Sciatic nerve (tissue), 2 donors: ENCODE measurements at regions of chr1 and their contacts with region 1.

Region 1: GRCh38 chr1:204736836-204737387 is 51.4 kb upstream of the LRRN2 start:
- DNase-seq: no peak
- ATAC-seq: no peak

Region 2: DNA sequence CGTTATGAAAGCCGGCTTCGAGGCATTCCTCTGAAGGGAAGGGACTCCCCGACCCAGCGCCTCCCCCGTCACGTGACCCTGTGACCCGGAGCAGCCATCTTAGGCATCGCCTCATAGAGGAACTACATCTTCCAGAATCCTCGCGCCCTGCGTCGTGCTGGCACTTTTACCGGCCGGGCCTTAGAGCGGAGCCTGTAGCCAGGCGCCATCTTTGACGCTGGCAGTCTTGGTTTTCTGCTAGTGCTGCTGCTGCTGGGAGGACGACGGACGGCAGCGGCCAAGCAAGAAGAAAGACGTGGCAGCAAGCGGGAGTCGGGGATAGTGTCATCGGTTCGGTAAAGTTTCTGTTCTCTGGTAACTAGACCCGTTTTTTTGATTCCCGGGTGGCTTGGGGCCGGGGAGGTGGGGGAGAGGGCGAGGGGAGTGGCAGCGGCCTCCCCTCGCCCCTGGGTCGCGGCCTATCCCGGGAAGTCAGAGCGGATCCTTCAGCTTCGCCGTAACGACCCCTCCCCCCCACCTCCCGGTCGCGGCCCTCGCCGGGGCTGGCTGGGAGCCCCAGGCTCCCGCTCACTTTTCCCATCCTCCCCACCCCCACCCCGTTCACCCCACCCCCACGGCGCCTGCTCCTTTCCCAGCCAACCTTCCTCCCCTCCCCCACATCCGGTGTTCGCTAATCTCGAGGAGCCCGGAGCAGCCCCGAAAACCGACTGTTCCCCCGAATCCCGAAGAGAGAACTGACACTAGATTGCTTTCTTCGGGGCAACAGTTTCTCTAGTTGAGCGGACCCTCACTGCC is 941.3 kb before region 1 on chr1 and contains the starts of genes ZBED6 and ZC3H11A:
- intact Hi-C with region 1: no loop called
- DNase-seq: peak; percentile 100
- ATAC-seq: peak; percentile 99
- total RNA-seq, gene ZBED6: 52.3 TPM
- total RNA-seq, gene ZC3H11A: 84.7 TPM

Region 3: DNA sequence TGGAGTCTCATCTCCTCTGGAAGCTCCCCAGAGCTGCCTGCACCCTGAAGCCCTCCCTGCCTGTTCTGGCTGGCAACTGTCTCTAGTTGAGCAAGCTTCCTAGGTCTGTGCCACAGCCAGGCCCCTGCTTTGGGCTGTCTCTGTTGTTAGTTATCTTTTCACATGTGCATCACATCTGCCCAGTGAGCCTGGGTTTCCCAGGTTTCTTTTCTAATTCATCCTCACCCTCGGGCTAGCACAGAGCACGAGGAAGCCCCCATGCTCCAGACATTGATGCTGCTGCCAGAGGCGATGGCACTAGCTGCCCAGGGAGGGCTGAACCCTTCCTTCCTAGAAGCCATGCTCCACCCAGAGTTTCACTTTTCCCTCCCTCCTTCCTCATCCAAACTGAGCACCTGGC is 1797.6 kb after region 1 on chr1:
- intact Hi-C with region 1: loop called (anchors 5 kb)
- DNase-seq: peak; percentile 34
- ATAC-seq: no peak